Activated T-helper 2 cell treated with anti-CD3 and anti-CD28 coated beads, Interferon-gamma antibody, Interleukin-2, Interleukin-4, amounts not matched to agents 10 μg/mL and 5 μg/mL and 100 μg/mL, durations not matched to agents 14 hours and 24 hours and 36 hours (primary cell): ENCODE measurements at regions of chrX and their contacts with region 1.

Region 1: GRCh38 chrX:9464435-9465371 is at the start of gene TBL1X:
- DNase-seq: peak; percentile 42
- H3K4me3 Mint-ChIP-seq: peak within 1 kb of the TSS; percentile 69
- H3K27ac Mint-ChIP-seq: peak within 1 kb of the TSS; percentile 76
- H3K4me1 Mint-ChIP-seq: peaks cover 32% of the 10 kb centered on the region
- H3K27me3 Mint-ChIP-seq: no peaks in the 10 kb centered on the region
- total RNA-seq, gene TBL1X: 49.0 and 53.2 TPM in 2 replicates

Region 2: DNA sequence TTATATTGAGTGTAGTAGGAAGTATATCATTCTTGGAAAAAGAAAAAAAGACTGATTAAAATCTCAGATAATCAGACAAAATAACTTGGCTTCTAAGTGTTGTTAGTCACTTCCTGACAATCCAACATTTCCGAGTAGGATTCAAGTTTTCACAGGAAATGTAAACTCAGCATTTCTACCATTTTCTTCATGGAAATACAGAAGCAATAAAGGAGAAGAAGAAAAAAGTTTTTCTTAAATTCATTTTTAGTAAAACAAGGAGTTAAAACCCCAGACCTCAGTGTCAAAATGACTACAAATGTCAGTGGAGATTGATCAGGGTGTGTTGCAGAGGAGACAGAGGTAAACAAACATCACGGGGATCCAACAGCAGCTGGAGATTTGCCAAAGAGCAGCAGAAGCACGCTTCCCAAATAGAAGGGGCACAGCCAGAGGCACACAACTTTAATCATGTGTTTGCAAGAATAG is 301.5 kb before region 1 on chrX:
- intact Hi-C with region 1: loop called (anchors 2 kb)
- DNase-seq: no peak
- H3K4me3 Mint-ChIP-seq: peak overlapping the region; percentile 8
- H3K27ac Mint-ChIP-seq: peak overlapping the region; percentile 81
- H3K4me1 Mint-ChIP-seq: peaks cover 55% of the 10 kb centered on the region
- H3K27me3 Mint-ChIP-seq: no peaks in the 10 kb centered on the region

Region 3: GRCh38 chrX:9341291-9342201 is 123.2 kb before region 1 on chrX:
- intact Hi-C with region 1: loop called (anchors 1 kb)
- DNase-seq: peak; percentile 49
- H3K4me3 Mint-ChIP-seq: peak overlapping the region; percentile 58
- H3K27ac Mint-ChIP-seq: peak overlapping the region; percentile 90
- H3K4me1 Mint-ChIP-seq: peaks cover 34% of the 10 kb centered on the region
- H3K27me3 Mint-ChIP-seq: no peaks in the 10 kb centered on the region

Region 4: GRCh38 chrX:9644335-9644734 is 179.6 kb after region 1 on chrX:
- intact Hi-C with region 1: loop called (anchors 5 kb)
- DNase-seq: peak; percentile 26
- H3K4me3 Mint-ChIP-seq: no peak overlapping the region
- H3K27ac Mint-ChIP-seq: peak overlapping the region; percentile 17
- H3K4me1 Mint-ChIP-seq: peaks cover 24% of the 10 kb centered on the region
- H3K27me3 Mint-ChIP-seq: no peaks in the 10 kb centered on the region

Region 5: GRCh38 chrX:9708904-9709553 is 244.3 kb after region 1 on chrX:
- intact Hi-C with region 1: loop called (anchors 10 kb)
- DNase-seq: peak; percentile 53
- H3K4me3 Mint-ChIP-seq: no peak overlapping the region
- H3K27ac Mint-ChIP-seq: peak overlapping the region; percentile 67
- H3K4me1 Mint-ChIP-seq: peaks cover 6% of the 10 kb centered on the region
- H3K27me3 Mint-ChIP-seq: no peaks in the 10 kb centered on the region

Region 6: GRCh38 chrX:10098270-10098713 is 633.6 kb after region 1 on chrX:
- intact Hi-C with region 1: loop called (anchors 2 kb)
- DNase-seq: peak; percentile 60
- H3K4me3 Mint-ChIP-seq: peak overlapping the region; percentile 76
- H3K27ac Mint-ChIP-seq: peak overlapping the region; percentile 91
- H3K4me1 Mint-ChIP-seq: peaks cover 31% of the 10 kb centered on the region
- H3K27me3 Mint-ChIP-seq: no peaks in the 10 kb centered on the region